Activated B cell treated with CpG ODN at 0.5 μM for 24 hours (primary cell): ENCODE measurements at regions of chr5 and their contacts with region 1.

Region 1: DNA sequence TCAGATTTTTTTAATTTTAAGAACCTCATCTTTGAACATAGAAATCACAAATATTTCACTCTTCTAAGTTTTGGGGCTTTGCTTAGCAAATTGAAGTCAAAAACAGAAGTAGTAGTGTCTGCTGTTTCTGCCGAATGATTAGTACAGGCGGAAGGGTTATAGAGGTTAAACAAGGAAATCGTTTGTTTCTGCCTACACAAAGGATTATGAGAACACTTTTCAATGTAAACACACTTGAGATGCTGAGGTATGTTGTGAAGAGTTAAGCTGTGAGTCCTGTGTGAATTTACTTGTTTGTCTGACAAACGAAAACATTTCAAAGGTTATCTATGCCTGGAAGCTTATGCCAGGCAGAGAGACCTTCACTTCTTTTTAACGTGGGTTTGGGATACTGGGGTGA is 224.8 kb downstream of the CETN3 start:
- DNase-seq: no peak
- ATAC-seq: no peak
- H3K4me3 Mint-ChIP-seq: no peak overlapping the region
- H3K27ac Mint-ChIP-seq: no peak overlapping the region
- H3K4me1 Mint-ChIP-seq: peaks cover 3% of the 10 kb centered on the region
- H3K27me3 Mint-ChIP-seq: peaks cover 4% of the 10 kb centered on the region
- CTCF ChIP-seq: no peak

Region 2: DNA sequence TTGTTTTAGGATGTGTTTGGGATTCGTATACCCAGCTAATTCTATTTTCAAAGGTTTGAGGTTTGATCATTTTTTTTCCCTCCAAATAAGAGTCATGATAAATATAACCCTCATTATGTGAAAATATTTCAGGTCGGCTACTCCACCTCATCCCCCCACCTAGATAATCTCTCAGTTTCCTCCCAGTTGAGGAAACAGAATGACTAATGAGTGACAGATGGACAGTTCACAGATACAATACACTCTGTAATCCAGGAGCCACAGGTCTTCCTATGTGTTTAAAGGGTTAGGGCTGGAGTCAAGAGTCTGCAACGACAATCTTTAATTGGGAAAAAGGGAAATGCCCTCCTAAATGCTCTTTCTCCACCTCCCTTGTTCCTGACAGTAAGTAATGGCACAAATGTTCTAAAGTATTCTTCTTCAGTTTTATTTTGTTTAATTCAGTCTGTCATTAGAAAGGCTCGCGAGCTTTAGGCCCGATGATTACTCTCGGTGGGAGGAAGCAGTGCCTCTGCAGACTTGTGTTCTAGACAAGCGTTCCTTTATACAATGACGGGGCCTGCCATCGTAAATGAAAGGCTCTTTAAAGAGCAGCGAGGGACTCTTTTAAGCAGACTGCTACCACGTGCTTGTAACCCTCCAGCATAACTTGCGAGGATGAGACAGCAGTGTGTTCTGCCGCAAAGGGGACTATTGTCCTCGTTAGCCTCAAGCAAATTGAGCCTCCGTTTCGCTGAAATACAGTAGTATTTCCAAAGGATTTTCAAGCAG is 1370.8 kb before region 1 on chr5:
- CTCF ChIA-PET with region 1: interaction called, 3 read pairs
- POLR2A ChIA-PET with region 1: no interaction called
- intact Hi-C with region 1: loop called (anchors 10 kb)
- DNase-seq: no peak
- ATAC-seq: no peak
- H3K4me3 Mint-ChIP-seq: no peak overlapping the region
- H3K27ac Mint-ChIP-seq: peak overlapping the region; percentile 50
- H3K4me1 Mint-ChIP-seq: peaks cover 89% of the 10 kb centered on the region
- H3K27me3 Mint-ChIP-seq: no peaks in the 10 kb centered on the region
- CTCF ChIP-seq: no peak